ENCODE measurements at regions of chr1 and their contacts with region 1.

Region 1: GRCh38 chr1:154765970-154766369 is 104.1 kb downstream of the KCNN3 start:
- DNase-seq: no peak
- H3K4me3 Mint-ChIP-seq: no peak overlapping the region
- H3K27ac Mint-ChIP-seq: no peak overlapping the region
- H3K4me1 Mint-ChIP-seq: peaks cover 10% of the 10 kb centered on the region
- H3K27me3 Mint-ChIP-seq: peaks cover 18% of the 10 kb centered on the region

Region 2: DNA sequence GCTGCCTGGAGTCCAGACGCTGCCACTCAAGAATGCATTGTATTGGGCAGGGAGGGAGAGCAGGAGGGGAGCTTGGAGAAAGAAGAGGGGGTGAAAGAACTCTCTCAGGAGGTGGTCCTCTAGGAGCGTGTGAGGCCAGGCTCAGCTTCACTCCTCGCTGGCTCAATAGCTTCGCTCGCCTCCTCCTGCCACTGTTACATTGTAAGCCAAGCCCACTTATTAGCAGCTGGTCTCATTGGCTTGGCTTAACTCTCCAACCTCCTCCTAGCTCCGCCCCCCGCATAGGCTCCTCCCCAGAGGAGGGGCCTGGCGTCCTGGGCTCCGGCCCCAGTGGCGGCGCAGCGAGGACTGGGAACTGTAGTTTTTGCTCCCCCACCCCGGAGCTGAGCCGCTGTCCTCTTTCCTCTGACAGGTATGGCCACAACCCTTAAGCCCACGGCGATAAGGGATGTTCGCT is 104.2 kb after region 1 on chr1 and contains the start of gene KCNN3:
- intact Hi-C with region 1: loop called (anchors 5 kb)
- DNase-seq: peak; percentile 95
- H3K4me3 Mint-ChIP-seq: peak within 1 kb of the TSS; percentile 53
- H3K27ac Mint-ChIP-seq: no peak within 1 kb of the TSS
- H3K4me1 Mint-ChIP-seq: peaks cover 41% of the 10 kb centered on the region
- H3K27me3 Mint-ChIP-seq: peaks cover 32% of the 10 kb centered on the region
- total RNA-seq, gene KCNN3: 0.35 and 0.54 TPM in 2 replicates

Measured in activated CD4-positive, alpha-beta T cell treated with anti-CD3 and anti-CD28 coated beads, Interleukin-2, amount 10 ng/mL, durations not matched to agents 24 days and 14 days (primary cell).